Posterior cingulate gyrus (tissue), 11 donors: ENCODE measurements at regions of chr9 and their contacts with region 1.

Region 1: GRCh38 chr9:124771021-124771866 is at the start of gene NR6A1:
- DNase-seq: peak; percentile 91 to 99 (median 94)

Region 2: DNA sequence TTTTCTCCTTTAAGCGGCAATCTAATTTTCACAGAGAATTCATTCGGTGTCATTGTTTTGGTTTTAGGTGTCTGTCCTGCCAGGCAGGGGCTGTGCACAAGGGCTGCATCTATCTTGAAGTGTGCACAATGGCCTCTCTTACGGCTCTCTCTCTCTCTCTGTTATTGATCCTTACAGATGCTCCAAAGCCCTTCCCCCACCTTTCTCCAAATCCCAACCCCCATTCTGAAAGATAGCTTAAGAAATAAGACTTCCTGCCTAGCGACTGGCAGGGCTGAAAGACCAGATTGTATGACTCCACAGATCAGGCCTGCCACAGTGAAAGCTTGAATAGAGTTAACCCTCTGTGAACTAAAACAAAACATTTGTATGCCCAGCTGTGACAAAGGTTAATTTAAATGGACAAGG is 177.6 kb before region 1 on chr9:
- intact Hi-C with region 1: no loop called
- DNase-seq: no peak

Region 3: GRCh38 chr9:124852829-124853531 is 81.7 kb after region 1 on chr9 and contains the start of gene WDR38:
- intact Hi-C with region 1: loop called (anchors 1 kb)
- DNase-seq: peak in 9 of 10 donors; percentile 45 to 95 (median 70)

Region 4: DNA sequence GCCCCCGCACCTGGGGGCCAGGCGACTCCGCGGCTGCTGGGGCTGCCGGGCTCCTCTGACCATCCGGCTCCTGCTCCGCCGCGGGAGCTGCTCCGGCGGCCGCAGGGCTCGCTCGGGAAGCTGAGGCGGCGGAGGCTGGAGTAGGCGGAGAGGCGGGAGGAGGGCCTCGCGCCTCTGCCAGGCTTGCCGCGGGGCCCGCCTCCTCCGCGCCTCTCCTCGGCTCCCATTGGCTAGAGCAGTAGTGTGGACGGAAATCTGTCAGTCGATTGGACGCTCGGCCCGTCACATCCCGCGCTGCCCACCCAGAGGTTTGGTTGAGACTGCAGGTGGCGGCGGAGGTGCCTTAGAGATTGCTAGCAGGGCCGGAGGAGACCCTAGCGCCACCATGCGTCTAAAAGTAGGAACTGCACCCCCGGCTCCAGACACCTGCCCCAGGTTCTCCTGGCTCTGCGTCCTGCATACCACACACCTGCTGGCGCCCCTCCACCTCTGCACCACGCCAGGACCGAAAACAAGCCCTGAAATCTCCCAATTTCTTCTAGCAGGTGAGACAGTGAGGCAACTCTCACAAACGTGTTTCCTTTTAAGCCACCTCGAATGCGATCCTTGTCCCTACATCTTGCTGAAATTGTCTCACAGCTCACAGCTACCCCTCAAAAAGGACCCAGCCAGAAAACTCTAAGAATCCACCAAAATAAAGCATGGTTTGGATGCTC is 372.3 kb after region 1 on chr9 and contains the start of gene SCAI:
- intact Hi-C with region 1: loop called (anchors 10 kb)
- DNase-seq: peak; percentile 97 to 100 (median 100)